ENCODE measurements at regions of chr6 and their contacts with region 1.

Region 1: DNA sequence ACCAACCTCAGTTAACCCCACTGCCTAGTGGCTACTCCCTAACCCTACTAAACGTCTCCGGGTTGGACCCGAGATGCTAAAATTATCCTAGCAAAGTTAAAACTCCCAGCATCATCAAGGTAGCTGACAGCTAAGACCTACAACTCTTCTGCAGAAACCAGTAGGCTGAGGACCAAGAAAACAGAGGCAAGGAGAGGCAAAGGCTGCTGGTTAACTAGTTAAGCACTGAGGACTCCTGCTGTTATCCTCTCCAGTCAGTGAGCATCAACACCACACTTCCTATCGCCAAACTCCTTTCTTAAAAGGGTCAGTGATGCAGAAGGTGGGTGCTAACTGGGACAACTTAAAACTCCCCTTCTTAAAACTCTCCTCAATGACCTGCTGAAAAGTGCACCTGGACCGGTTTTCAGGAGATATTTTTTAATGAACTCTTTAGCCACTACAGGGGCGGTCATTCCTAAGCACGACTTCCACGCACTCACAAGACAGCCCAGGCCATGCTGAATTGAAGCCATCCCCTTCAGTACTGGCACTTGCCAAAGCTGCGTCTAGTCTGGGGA is 1.7 kb downstream of the TRERF1 start:
- DNase-seq: no peak
- H3K4me3 ChIP-seq: peak overlapping the region; percentile 76 to 85 (median 81)
- H3K27ac ChIP-seq: peak overlapping the region in 1 of 2 donors; percentile 70
- H3K4me1 ChIP-seq: no peaks in the 10 kb centered on the region
- H3K27me3 ChIP-seq: no peaks in the 10 kb centered on the region
- CTCF ChIP-seq: no peak
- POLR2A ChIP-seq: no peak

Region 2: GRCh38 chr6:42532038-42532669 is 82.2 kb after region 1 on chr6:
- intact Hi-C with region 1: no loop called
- DNase-seq: no peak
- H3K4me3 ChIP-seq: no peak overlapping the region
- H3K27ac ChIP-seq: no peak overlapping the region
- H3K4me1 ChIP-seq: no peaks in the 10 kb centered on the region
- H3K27me3 ChIP-seq: no peaks in the 10 kb centered on the region
- CTCF ChIP-seq: peak; percentile 77 to 93 (median 81)
- POLR2A ChIP-seq: no peak

Region 3: DNA sequence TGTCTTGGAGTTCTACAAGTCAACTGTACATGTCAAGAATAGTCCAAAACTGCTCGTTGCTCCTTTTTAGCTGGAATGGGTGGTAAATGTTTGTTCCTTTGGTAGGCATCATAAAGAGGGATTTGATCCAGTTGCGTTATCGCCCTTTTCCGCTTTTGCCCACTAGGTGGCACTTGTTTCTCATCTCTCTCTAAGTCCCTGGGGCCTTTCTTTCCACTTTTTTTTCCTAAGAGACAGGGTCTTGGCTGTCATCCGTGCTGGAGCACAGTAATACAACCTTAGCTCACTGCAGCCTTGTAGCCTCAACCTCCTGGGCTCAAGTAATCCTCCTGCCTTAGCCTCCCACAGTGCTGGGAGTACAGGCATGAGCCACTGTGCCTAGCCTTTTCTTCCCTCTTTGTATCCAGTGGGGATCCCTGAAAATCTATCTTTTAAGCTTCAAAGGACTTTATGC is 1158.3 kb after region 1 on chr6:
- intact Hi-C with region 1: loop called (anchors 5 kb)
- DNase-seq: no peak
- H3K4me3 ChIP-seq: no peak overlapping the region
- H3K27ac ChIP-seq: no peak overlapping the region
- H3K4me1 ChIP-seq: no peaks in the 10 kb centered on the region
- H3K27me3 ChIP-seq: no peaks in the 10 kb centered on the region
- CTCF ChIP-seq: peak; percentile 62 to 69 (median 66)
- POLR2A ChIP-seq: no peak

Measured in breast epithelium (tissue), 4 donors.